ENCODE measurements at regions of chr1 and their contacts with region 1.

Region 1: DNA sequence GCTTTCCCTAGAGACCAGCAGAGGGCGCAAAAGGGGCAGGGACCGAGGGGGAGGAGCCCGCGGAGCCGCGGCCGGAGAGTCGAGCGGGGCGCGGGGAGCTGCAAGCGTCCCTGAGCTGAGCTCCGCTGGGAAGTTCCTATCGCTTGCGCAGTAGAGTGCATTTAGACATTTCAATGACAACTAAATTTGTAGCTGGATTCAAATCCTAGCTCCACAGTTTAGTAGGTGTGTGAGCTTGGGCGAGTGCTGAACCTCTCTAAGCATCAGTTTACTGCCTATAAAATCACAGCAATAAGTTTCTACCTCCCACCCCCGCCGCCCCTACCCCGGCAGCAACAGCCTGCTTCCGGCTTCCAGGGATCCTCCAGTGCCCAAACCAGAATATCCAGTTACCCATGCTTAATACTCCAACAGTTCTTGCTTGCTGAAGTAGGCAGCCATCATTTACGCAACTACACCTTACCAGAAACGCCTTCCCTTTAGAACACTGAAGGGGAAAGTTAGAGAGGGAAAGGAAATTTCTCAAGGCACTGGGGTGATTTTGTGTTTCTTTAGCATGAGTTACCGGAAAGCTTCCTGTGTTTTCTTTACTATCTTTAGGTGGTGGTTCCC is 9.1 kb downstream of the TLR5 start:
- DNase-seq: peak; percentile 78 to 89
- H3K4me3 ChIP-seq: peak overlapping the region; percentile 25 to 59 (median 49)
- H3K27ac ChIP-seq: peak overlapping the region; percentile 78 to 88
- H3K4me1 ChIP-seq: peaks cover 10 to 25% of the 10 kb centered on the region in 2 donors
- H3K27me3 ChIP-seq: no peaks in the 10 kb centered on the region
- CTCF ChIP-seq: peak; percentile 81 to 96 (median 91)
- POLR2A ChIP-seq: no peak

Region 2: GRCh38 chr1:222950892-222951291 is 183.0 kb before region 1 on chr1:
- intact Hi-C with region 1: no loop called
- DNase-seq: no peak
- H3K4me3 ChIP-seq: no peak overlapping the region
- H3K27ac ChIP-seq: no peak overlapping the region
- H3K4me1 ChIP-seq: no peaks in the 10 kb centered on the region
- H3K27me3 ChIP-seq: no peaks in the 10 kb centered on the region
- CTCF ChIP-seq: no peak
- POLR2A ChIP-seq: no peak

Region 3: DNA sequence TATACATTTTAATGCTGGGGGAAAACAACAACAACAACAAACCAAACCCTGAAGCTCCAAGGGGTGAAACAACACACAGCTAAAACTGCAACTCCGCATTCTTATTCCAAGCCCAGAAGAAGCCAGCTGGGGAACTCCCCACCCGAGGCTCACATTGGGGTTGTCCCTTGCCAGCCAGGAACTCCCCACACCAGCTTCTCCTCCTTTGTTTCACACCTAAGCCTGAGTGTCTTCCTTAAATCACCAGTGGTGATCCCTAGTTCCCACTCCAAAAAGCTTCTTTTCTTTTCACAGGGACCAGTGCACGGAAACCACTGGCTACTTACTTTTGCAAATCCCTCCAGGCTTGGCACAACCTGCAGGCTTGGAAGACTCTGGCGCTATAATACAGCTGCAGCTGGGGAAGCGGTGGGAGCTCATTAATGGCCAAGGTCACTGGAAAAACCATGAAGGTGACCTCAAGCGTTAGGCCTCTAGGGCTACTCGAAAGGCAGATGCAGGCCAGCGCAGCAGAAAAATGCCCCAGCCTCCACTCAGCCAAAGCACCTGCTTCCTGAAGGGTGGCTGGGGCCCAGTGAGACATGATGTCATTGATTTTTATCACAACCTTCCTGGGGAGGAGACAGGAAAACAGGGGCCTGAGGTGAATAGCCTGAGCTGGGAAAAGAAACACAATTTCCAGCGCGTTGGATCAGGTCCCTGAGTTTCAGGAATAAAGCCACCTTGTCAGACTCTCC is 31.0 kb before region 1 on chr1:
- intact Hi-C with region 1: no loop called
- DNase-seq: peak in 1 of 2 donors; percentile 28
- H3K4me3 ChIP-seq: no peak overlapping the region
- H3K27ac ChIP-seq: peak overlapping the region in 1 of 2 donors; percentile 21
- H3K4me1 ChIP-seq: no peaks in the 10 kb centered on the region
- H3K27me3 ChIP-seq: no peaks in the 10 kb centered on the region
- CTCF ChIP-seq: no peak
- POLR2A ChIP-seq: no peak

Region 4: DNA sequence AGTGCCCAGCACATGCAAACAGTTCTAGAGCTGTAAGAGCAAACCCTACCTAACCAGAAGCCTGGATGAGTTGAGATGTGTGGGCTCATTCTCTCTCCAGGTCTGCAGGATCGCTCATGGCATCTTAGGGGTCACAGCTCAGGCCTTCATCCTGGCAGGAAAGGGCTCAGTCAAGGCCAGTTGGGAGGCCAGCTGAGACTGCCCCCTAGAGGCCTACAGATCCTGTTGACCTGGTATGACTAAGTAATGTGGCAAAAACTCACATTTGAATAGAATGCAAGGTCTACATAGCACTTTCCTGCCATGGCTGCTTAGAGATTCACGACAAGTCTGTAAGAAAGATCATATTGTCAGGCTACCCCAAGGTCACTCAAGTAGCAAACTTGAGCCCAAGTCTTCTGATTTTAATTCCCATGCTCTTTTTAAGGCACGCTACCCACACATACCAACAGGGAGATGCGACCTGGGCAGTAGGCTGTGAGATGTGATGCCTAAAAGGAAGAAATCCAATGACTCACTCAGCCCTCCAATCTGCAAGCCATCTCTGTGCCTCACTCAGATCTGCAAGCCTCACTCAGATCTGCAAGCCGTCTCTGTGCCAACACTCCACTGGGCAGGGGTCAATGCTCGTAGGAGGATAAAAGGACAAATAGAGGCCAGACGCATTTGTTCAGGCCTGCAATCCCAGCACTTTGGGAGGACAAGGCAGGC is 536.7 kb after region 1 on chr1:
- intact Hi-C with region 1: loop called (anchors 10 kb)
- DNase-seq: no peak
- H3K4me3 ChIP-seq: no peak overlapping the region
- H3K27ac ChIP-seq: no peak overlapping the region
- H3K4me1 ChIP-seq: no peaks in the 10 kb centered on the region
- H3K27me3 ChIP-seq: no peaks in the 10 kb centered on the region
- CTCF ChIP-seq: peak in 1 of 3 donors; percentile 17
- POLR2A ChIP-seq: no peak

Measured in breast epithelium (tissue), 4 donors.